Gastrocnemius medialis (tissue), 4 donors: ENCODE measurements at regions of chr2 and their contacts with region 1.

Region 1: GRCh38 chr2:42828487-42829425 is 36.4 kb upstream of the HAAO start:
- DNase-seq: peak; percentile 43 to 62
- ATAC-seq: peak; percentile 64 to 78
- H3K4me3 ChIP-seq: no peak overlapping the region
- H3K27ac ChIP-seq: peak overlapping the region in 1 of 4 donors; percentile 63
- H3K4me1 ChIP-seq: peaks cover 11 to 17% of the 10 kb centered on the region in 2 donors
- H3K27me3 ChIP-seq: no peaks in the 10 kb centered on the region
- CTCF ChIP-seq: peak; percentile 75 to 91 (median 87)
- POLR2A ChIP-seq: no peak

Region 2: DNA sequence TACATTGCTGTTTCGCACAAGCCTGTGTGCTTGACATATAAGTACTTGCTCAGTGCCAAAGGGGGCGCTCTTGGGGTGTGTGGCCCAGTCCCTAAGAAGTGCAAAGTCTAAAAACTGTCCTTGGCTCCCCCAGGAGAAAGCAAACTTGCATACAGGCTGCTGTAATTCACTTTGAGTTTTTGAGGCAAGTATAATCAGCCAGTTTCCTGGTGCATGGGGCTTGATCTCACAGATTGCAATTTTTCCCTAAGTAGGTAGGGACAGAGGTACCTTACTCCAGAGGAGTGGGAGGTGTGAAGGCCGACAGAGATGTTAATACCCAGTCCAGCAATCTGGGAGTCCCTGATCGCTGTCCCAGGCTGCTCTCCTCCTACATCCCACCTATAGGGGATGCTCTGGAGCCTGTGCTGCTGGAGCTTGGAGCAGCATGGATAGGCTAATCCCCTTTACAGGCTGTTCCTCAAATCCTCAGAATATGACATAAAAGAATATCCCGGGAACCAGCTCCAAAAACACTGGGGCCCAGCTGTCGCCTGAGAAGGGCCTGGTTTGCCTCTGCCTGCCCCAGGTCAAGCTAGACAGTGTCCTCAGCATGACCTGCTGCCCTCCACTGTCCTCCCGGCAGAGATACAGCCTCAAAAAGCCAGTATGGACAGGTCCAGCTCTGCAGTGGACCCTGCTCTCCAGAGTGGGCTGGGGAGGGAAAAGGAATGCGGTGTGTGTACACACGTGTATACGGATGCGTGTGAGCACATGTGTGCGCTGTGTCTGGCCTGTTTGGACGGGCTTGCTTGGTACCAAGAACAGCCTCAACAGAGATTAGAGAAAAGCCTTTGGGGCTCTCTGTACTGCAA is 100.2 kb after region 1 on chr2:
- in situ Hi-C with region 1: loop called in 2 of 4 experiments (anchors 25 kb)
- intact Hi-C with region 1: loop called (anchors 5 kb)
- DNase-seq: no peak
- ATAC-seq: no peak
- H3K4me3 ChIP-seq: no peak overlapping the region
- H3K27ac ChIP-seq: peak overlapping the region; percentile 67 to 81 (median 74)
- H3K4me1 ChIP-seq: peaks cover 59 to 65% of the 10 kb centered on the region in 2 donors
- H3K27me3 ChIP-seq: no peaks in the 10 kb centered on the region
- CTCF ChIP-seq: peak in 2 of 5 experiments; percentile 12 to 34
- POLR2A ChIP-seq: no peak

Region 3: DNA sequence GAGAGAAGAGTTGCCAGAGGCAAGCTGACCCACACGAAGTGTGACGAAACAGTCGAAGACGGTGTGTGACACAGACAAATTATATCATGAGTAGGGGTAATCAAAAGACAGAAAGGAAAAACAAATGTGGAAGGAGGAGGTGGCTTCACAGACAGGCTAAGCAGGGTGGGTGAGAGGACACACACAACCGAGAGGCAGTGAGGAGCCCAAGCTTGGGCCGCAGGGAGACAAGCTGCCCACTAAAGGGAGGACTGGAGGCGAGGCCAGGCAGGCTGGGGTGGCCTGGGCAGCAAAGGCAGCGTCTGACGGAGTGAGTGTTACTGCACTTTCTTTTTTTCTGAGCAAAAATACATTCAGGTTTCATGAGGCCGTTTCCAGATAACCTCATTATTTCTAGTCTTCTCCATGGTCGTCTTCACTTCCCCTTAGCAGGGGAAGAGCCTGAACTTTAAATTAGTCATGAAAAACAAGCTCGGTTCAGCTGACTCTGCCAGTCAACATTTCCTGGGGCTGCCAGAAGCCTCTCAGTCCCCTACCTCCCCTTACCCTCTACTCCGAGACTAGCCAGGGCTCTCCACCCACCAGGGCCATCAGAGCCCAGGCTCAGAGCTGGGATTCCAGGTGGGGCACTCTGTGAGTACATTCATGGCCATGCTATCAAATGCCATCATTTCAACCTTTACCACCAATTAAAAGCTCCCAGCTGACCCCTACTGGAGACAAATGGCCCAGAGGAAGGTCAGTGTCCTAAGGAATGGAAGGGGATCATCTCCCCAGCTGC is 411.4 kb after region 1 on chr2:
- in situ Hi-C with region 1: loop called (anchors 10 to 25 kb)
- intact Hi-C with region 1: no loop called
- DNase-seq: no peak
- ATAC-seq: peak in 1 of 2 donors; percentile 30
- H3K4me3 ChIP-seq: no peak overlapping the region
- H3K27ac ChIP-seq: peak overlapping the region; percentile 5 to 49 (median 36)
- H3K4me1 ChIP-seq: no peaks in the 10 kb centered on the region
- H3K27me3 ChIP-seq: no peaks in the 10 kb centered on the region
- CTCF ChIP-seq: no peak
- POLR2A ChIP-seq: no peak

Region 4: GRCh38 chr2:43559391-43560230 is 730.9 kb after region 1 on chr2:
- in situ Hi-C with region 1: loop called in 2 of 4 experiments (anchors 25 kb)
- intact Hi-C with region 1: no loop called
- DNase-seq: no peak
- ATAC-seq: no peak
- H3K4me3 ChIP-seq: no peak overlapping the region
- H3K27ac ChIP-seq: no peak overlapping the region
- H3K4me1 ChIP-seq: no peaks in the 10 kb centered on the region
- H3K27me3 ChIP-seq: no peaks in the 10 kb centered on the region
- CTCF ChIP-seq: no peak
- POLR2A ChIP-seq: no peak

Region 5: DNA sequence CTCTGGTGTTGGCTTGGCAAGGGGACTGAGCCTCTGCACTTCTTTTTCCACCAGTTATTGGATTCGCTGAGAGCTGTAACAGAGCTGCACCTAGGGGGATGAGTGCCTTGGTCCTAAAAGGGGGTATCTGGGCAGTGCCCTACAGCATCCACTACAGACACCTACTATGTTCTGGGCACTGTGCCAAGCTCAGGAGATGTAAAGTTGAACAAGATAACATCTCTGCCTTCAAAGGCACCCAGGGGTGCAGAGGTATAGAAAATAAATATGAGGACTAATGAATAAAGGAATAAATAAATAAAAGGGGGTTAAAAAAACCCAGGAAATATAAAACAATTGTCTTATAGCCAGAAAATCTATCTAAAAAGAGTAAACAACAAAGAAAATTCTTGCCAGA is 781.2 kb after region 1 on chr2:
- in situ Hi-C with region 1: no loop called
- intact Hi-C with region 1: loop called (anchors 1 kb)
- DNase-seq: no peak
- ATAC-seq: no peak
- H3K4me3 ChIP-seq: no peak overlapping the region
- H3K27ac ChIP-seq: no peak overlapping the region
- H3K4me1 ChIP-seq: no peaks in the 10 kb centered on the region
- H3K27me3 ChIP-seq: no peaks in the 10 kb centered on the region
- CTCF ChIP-seq: no peak
- POLR2A ChIP-seq: no peak